ENCODE measurements at regions of chr20 and their contacts with region 1.

Region 1: GRCh38 chr20:13749811-13750210 is 34.9 kb downstream of the ESF1 start:
- DNase-seq: no peak
- H3K4me3 ChIP-seq: no peak overlapping the region
- H3K27ac ChIP-seq: no peak overlapping the region
- H3K4me1 ChIP-seq: no peaks in the 10 kb centered on the region
- H3K27me3 ChIP-seq: no peaks in the 10 kb centered on the region
- CTCF ChIP-seq: no peak

Region 2: DNA sequence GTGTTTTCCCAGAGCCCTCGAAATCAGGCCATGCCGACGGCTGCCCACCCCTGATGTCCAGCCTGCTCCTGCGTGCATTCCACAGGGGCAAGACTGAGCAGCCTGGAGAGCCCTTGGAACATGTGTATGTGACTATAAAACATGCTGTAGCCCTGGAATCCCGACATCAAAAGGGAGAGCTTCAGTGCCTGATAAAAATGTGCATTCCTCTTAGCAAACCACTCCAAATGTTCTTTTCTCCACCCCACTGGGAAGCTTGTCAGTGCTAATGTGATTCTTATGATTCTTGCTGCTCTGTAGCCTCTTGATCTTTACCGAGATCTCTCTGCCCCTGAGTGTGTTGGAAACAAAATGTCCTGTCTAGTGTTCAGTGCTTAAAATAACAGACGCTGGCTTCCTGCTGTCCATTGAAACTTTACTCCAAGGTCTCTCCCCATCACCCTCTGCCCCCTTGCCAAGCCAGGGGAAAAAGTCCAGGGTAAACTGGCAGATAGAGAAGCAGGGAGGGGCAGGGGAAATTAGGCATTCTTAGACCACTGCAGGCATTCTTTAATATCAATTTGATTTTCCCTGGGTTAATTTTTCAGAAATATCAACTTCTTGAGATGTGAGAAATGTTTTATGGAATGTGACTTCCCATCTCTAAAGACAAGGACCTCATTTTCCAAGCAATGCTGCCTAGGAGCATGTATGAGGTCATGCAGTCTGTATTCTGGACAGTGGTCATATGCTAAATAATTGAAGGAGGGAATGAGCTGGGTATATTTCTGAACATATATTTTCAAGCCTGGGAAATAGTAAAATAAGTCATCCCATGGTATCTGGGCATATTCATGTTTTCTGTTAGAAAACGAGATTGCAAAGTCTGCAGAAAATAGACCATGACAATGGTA is 602.5 kb before region 1 on chr20:
- intact Hi-C with region 1: no loop called
- DNase-seq: no peak
- H3K4me3 ChIP-seq: no peak overlapping the region
- H3K27ac ChIP-seq: no peak overlapping the region
- H3K4me1 ChIP-seq: peaks cover 0 to 6% of the 10 kb centered on the region in 2 donors
- H3K27me3 ChIP-seq: no peaks in the 10 kb centered on the region
- CTCF ChIP-seq: no peak

Region 3: GRCh38 chr20:13690943-13691342 is 58.9 kb before region 1 on chr20:
- intact Hi-C with region 1: loop called (anchors 5 kb)
- DNase-seq: no peak
- H3K4me3 ChIP-seq: no peak overlapping the region
- H3K27ac ChIP-seq: peak overlapping the region; percentile 72 to 75
- H3K4me1 ChIP-seq: peaks cover 0 to 9% of the 10 kb centered on the region in 2 donors
- H3K27me3 ChIP-seq: no peaks in the 10 kb centered on the region
- CTCF ChIP-seq: no peak

Measured in ascending aorta (tissue), 2 donors.